CD4-positive, alpha-beta memory T cell (primary cell): ENCODE measurements at regions of chr1 and their contacts with region 1.

Region 1: DNA sequence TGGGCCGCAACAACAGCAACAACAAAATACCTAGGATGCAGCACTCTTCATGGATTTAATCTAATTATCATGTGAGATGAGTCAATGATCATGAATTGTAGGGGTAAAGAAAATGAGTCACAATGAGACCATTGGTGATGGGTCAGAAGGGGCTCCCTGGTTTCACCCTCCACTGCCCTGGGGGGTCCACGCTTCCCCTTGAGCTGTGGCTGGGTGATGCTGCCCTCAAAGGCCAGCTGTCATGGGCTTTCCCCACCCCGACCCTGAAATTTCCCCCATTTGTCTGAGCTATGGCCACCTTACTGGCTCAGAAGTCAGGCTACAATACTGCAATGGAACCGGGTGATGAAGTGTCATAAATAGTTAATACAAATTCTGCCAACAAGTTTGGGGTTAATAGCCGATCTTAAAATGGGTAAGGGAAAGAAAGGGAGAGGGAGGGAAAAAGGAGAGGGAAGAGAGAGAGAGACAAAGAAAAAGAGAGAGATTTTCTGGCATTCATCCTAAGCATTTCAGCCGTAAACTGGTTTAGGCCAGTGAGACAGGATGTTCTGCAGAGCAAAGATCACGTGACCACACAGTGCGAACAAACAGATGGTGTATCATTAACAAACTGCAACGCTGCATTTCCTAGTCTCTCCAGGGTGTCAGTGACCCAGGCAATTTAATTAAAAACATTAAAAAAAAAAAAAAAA is 143.4 kb upstream of the ERRFI1 start:
- DNase-seq: peak; percentile 67 to 79 (median 77)
- H3K4me3 ChIP-seq: peak overlapping the region in 1 of 2 donors; percentile 15
- H3K4me3 Mint-ChIP-seq: peak overlapping the region; percentile 43 to 86 (median 78)
- H3K27ac ChIP-seq: peak overlapping the region; percentile 44
- H3K27ac Mint-ChIP-seq: peak overlapping the region; percentile 88 to 99 (median 97)
- H3K4me1 ChIP-seq: peaks cover 41% of the 10 kb centered on the region
- H3K4me1 Mint-ChIP-seq: peaks cover 22 to 53% (median 34%) of the 10 kb centered on the region in 4 donors
- H3K27me3 ChIP-seq: no peaks in the 10 kb centered on the region
- H3K27me3 Mint-ChIP-seq: peaks cover 0 to 1% of the 10 kb centered on the region in 2 donors

Region 2: GRCh38 chr1:8025341-8026144 is 144.0 kb before region 1 on chr1:
- CTCF ChIA-PET with region 1: no interaction called
- POLR2A ChIA-PET with region 1: no interaction called
- intact Hi-C with region 1: no loop called
- DNase-seq: peak in 3 of 5 donors; percentile 6 to 11 (median 9)
- H3K4me3 ChIP-seq: peak overlapping the region in 1 of 2 donors; percentile 33
- H3K4me3 Mint-ChIP-seq: peak overlapping the region; percentile 77 to 91 (median 86)
- H3K27ac ChIP-seq: no peak overlapping the region
- H3K27ac Mint-ChIP-seq: peak overlapping the region; percentile 7 to 89 (median 63)
- H3K4me1 ChIP-seq: peaks cover 14% of the 10 kb centered on the region
- H3K4me1 Mint-ChIP-seq: peaks cover 8 to 13% (median 10%) of the 10 kb centered on the region in 4 donors
- H3K27me3 ChIP-seq: peaks cover 6% of the 10 kb centered on the region
- H3K27me3 Mint-ChIP-seq: peaks cover 7 to 13% of the 10 kb centered on the region in 2 donors

Region 3: GRCh38 chr1:8182034-8182761 is 12.7 kb after region 1 on chr1:
- CTCF ChIA-PET with region 1: interaction called, 3 read pairs
- POLR2A ChIA-PET with region 1: interaction called, 19 read pairs
- intact Hi-C with region 1: loop called (anchors 1 kb)
- DNase-seq: peak; percentile 70 to 84 (median 79)
- H3K4me3 ChIP-seq: peak overlapping the region in 1 of 2 donors; percentile 15
- H3K4me3 Mint-ChIP-seq: peak overlapping the region; percentile 25 to 85 (median 71)
- H3K27ac ChIP-seq: peak overlapping the region; percentile 41
- H3K27ac Mint-ChIP-seq: peak overlapping the region; percentile 68 to 97 (median 91)
- H3K4me1 ChIP-seq: peaks cover 28% of the 10 kb centered on the region
- H3K4me1 Mint-ChIP-seq: peaks cover 16 to 23% (median 21%) of the 10 kb centered on the region in 4 donors
- H3K27me3 ChIP-seq: no peaks in the 10 kb centered on the region
- H3K27me3 Mint-ChIP-seq: no peaks in the 10 kb centered on the region